PC-9 (cell line): ENCODE measurements at regions of chr12 and their contacts with region 1.

Region 1: DNA sequence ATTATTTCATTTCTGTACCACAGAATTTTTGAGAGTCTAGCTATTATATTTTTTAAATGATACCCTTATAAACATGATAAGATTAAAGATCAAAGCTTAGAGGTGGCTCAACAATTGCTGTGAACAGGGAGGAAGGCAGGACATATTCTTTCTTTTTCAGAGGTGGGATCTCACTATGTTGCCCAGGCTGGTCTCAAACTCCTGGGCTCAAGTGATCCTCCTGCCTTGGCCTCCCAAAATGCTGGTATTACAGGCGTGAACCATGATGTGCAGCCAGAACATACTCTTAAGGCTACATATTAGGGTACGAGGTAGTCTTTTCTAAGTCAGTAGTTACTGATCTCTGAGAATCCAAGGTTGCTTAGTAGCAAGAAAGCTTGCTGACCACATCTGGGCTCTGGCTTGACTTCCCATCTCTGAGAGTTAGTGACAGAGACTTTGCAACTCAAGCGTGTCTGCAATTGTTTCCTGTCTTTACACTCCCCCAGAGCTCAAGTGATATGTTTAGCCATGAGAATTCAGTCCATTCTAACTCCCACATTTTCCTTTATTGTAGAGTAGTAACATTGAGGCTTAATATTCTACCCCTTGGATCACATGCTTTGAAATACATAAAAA is 8.6 kb downstream of the RAB5B start:
- DNase-seq: no peak
- H3K4me3 ChIP-seq: no peak overlapping the region
- H3K27ac ChIP-seq: no peak overlapping the region
- H3K4me1 ChIP-seq: peaks cover 17% of the 10 kb centered on the region
- H3K27me3 ChIP-seq: no peaks in the 10 kb centered on the region
- CTCF ChIP-seq: no peak

Region 2: GRCh38 chr12:55966408-55967281 is 15.8 kb before region 1 on chr12 and contains the start of gene CDK2:
- CTCF ChIA-PET with region 1: no interaction called
- POLR2A ChIA-PET with region 1: interaction called, 12 read pairs
- intact Hi-C with region 1: no loop called
- DNase-seq: peak; percentile 68 to 93
- H3K4me3 ChIP-seq: peak within 1 kb of the TSS; percentile 90
- H3K27ac ChIP-seq: peak within 1 kb of the TSS; percentile 49
- H3K4me1 ChIP-seq: peaks cover 28% of the 10 kb centered on the region
- H3K27me3 ChIP-seq: no peaks in the 10 kb centered on the region
- CTCF ChIP-seq: no peak
- total RNA-seq, gene CDK2: 93.8 and 99.4 TPM in 2 replicates

Region 3: GRCh38 chr12:56286044-56286830 is 303.8 kb after region 1 on chr12:
- CTCF ChIA-PET with region 1: interaction called, 15 read pairs
- POLR2A ChIA-PET with region 1: no interaction called
- intact Hi-C with region 1: no loop called
- DNase-seq: no peak
- H3K4me3 ChIP-seq: no peak overlapping the region
- H3K27ac ChIP-seq: no peak overlapping the region
- H3K4me1 ChIP-seq: peaks cover 12% of the 10 kb centered on the region
- H3K27me3 ChIP-seq: no peaks in the 10 kb centered on the region
- CTCF ChIP-seq: no peak